ENCODE measurements at regions of chrX and their contacts with region 1.

Region 1: GRCh38 chrX:17242470-17242869 is 132.5 kb upstream of the NHS start:
- DNase-seq: peak in 4 of 10 donors; percentile 8 to 17 (median 12)

Region 2: DNA sequence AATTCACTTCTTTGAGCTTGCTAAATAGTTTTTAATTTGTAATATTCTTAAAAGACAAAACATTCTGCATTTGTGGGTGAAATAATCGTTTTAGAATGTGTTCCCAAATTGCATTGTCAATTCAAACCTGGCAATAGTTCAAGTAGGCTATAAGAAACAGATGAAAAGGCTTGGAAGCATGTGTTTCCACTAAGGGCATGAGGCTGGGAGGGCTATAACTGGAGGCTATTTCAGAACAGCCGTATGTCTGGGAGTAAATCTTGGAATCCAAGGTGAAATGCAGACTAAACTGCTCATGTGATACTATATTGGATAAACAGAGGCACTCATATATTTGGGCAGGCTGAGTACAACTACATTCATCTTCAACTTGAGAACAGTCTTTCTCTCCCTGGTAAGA is 1236.6 kb before region 1 on chrX:
- intact Hi-C with region 1: no loop called
- DNase-seq: no peak

Region 3: DNA sequence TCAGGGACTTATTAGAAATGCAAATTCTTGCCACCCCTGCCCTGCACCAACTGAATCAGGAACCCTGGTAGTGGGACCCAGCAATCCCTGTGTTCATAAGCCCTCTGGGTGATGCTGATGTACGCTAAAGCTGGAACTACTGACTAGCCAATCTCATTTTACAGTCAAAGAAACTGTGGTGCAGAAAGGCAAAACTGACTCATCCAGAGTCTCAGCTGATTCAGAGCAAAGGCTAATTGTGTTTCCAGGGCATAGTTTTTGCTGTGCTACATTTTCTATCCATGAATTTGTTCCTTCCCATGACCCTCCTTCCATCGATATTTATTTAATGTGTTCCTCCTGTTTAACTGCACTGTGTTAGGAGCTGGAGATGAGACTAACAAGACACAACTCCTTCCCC is 88.5 kb before region 1 on chrX:
- intact Hi-C with region 1: no loop called
- DNase-seq: no peak

Region 4: GRCh38 chrX:17521871-17522693 is 279.6 kb after region 1 on chrX:
- intact Hi-C with region 1: no loop called
- DNase-seq: no peak

Region 5: GRCh38 chrX:17590892-17591740 is 348.6 kb after region 1 on chrX:
- intact Hi-C with region 1: loop called (anchors 5 kb)
- DNase-seq: peak; percentile 17 to 93 (median 45)

Region 6: GRCh38 chrX:17689971-17690409 is 447.5 kb after region 1 on chrX:
- intact Hi-C with region 1: loop called (anchors 1 kb)
- DNase-seq: peak in 5 of 10 donors; percentile 26 to 70 (median 38)

Region 7: DNA sequence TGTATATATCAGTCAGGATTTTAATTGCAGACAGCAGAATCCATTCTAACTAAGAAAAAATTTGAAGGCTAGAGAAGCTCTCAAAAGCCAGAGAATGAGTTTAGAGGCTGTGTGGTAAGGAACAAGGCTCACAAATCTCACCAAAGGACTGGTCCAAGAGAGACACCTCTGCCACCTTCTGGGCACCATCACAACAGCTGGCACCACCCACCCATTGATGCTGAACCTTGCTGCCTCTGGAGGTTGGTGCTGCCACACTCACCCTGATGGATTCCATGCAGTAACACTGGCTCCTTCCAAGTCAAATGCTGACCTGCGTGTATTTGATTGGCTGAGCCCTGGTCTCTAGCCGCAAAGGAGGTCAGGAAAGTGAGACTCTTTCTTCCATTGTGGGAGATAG is 877.4 kb after region 1 on chrX:
- intact Hi-C with region 1: no loop called
- DNase-seq: no peak